OCI-LY7 (cell line): ENCODE measurements at regions of chr12 and their contacts with region 1.

Region 1: GRCh38 chr12:116880817-116881324 is 370 bp downstream of the HRK start:
- DNase-seq: peak; percentile 93
- H3K4me3 ChIP-seq: peak overlapping the region; percentile 76
- H3K27ac ChIP-seq: peak overlapping the region; percentile 57
- H3K4me1 ChIP-seq: peaks cover 46% of the 10 kb centered on the region
- CTCF ChIP-seq: peak; percentile 49; the same call in 1 of the 2 replicates

Region 2: DNA sequence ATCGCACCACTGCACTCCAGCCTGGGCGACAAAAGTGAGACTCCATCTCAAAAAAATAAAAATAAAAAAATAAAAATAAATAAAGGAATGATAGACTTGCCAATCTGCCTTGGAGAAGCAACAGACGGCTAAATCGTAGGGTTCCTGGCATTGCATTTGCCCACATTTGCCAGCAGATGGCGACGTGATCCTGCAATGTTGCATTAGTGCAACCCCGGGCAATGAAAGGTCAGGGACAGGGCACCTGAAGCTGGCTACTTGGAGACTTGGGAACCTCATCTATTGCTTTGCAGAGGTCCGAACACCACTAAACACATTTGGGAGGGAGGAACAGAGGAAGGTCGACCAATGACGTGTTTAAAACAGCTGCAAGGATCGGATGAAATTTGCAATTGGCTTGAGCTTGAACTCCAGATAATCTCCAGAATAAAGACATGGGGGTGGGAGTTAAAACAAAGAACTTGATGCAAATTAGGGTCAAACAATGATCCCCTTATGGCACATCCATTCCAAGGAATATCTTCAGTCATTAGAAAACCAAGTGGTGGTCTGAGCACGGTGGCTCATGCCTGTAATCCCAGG is 177.6 kb before region 1 on chr12:
- CTCF ChIA-PET with region 1: interaction called, 13 read pairs
- POLR2A ChIA-PET with region 1: interaction called, 4 read pairs
- intact Hi-C with region 1: loop called (anchors 1 kb)
- DNase-seq: peak; percentile 86
- H3K4me3 ChIP-seq: no peak overlapping the region
- H3K27ac ChIP-seq: no peak overlapping the region
- H3K4me1 ChIP-seq: peaks cover 31% of the 10 kb centered on the region
- CTCF ChIP-seq: peak; percentile 94

Region 3: DNA sequence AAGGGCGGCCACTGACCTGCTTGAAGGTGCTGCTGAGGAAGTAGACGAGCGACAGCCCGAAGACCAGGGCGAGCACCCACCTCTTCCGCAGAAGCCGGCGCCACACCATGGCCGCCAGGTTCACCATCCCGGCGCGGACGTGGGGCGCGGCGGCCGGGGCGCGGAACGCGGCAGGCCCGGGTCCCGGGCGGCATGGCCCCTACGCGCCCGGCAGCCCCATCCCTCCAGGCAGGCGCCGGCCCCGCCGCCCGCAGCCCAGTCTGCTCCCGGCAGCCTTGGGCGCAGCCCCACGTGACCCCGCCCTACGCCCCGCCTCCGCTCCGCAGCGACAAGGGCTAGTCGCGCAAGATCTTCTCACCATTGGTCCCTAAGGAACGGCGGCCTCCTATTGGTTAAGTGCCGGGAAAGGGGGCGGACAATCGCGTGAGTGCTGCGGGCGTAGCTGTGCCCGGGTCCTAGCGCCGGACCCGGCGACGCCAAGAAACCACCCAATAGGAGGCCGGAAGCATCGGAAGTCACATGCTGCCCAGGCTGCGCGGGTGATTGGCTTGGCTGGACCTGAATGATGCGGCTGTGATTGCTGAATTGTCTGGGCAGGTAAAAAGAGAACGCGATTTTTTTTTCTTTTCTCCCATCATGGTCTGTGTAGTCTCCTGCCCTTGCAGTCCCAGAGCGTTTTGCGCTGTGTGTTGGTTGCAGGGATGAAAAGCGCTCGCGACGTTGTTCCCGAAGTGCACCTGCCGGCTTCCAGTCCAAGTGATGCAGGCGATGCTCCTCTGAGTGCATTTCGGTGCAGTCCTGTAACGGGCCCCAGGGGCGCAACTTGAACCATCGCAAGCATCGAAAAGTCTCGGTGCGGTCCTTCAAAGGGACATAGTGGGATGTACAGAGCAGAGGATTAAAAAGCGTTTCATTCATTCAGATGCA is 142.8 kb before region 1 on chr12 and contains the starts of genes RNFT2 and SPRING1:
- CTCF ChIA-PET with region 1: no interaction called
- POLR2A ChIA-PET with region 1: no interaction called
- intact Hi-C with region 1: loop called (anchors 1 kb)
- DNase-seq: peak; percentile 99
- H3K4me3 ChIP-seq: peak within 1 kb of the TSS; percentile 81
- H3K27ac ChIP-seq: peak within 1 kb of the TSS; percentile 65
- H3K4me1 ChIP-seq: peaks cover 17% of the 10 kb centered on the region
- CTCF ChIP-seq: peak; percentile 64
- total RNA-seq, gene RNFT2: 34.3 and 40.2 TPM in 2 replicates
- total RNA-seq, gene SPRING1: 51.2 and 75.5 TPM in 2 replicates

Region 4: GRCh38 chr12:116818948-116819832 is 61.7 kb before region 1 on chr12:
- CTCF ChIA-PET with region 1: no interaction called
- POLR2A ChIA-PET with region 1: interaction called, 4 read pairs
- intact Hi-C with region 1: loop called (anchors 1 kb)
- DNase-seq: peak; percentile 90
- H3K4me3 ChIP-seq: peak overlapping the region; percentile 82
- H3K27ac ChIP-seq: peak overlapping the region; percentile 78
- H3K4me1 ChIP-seq: peaks cover 56% of the 10 kb centered on the region
- CTCF ChIP-seq: no peak

Region 5: DNA sequence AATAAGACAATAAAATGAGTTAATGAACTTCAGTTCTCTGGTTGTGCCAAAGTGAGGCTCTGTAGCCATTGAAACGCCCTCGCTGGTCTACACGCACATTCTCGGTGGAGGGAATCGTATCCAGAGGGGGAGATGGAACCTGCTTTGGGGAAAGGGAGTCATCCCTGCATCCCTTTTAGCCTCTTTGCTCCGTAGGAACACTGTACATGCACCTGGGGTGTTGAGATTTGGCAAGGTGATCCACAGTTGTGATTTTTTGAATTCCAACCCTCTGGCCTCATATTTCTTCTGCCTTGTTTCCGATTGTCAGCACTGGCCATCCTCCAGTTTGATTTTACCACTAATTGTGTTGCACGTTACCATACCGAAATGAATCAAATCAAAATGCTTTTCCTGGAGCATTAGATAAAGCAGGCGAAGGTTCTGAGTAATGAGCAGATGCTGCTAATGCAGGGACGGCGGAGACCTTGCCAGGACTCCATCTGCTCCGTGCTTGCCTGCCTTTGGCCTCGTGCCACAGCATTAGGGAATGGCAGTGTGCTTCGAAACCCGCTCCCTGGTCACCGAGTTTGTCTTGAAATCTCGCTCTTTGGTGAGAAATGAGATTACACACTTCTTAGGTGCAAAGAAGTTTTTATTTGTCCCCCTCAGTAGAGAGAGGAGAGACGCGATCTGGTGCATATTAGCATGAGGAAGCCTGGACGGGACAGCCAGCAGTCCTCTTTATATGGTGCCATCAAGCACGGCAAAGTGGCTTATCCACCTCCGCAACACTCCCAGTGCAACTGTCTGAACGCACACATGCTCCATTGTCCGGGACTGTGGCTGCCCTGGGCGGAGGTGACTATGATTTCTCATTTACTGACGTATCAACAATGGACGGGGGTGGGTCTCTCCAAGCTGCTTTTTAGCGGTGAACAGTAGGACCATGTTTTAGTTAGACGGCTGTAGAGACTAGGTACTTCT is 89.0 kb after region 1 on chr12:
- CTCF ChIA-PET with region 1: no interaction called
- POLR2A ChIA-PET with region 1: interaction called, 10 read pairs
- intact Hi-C with region 1: no loop called
- DNase-seq: no peak
- H3K4me3 ChIP-seq: no peak overlapping the region
- H3K27ac ChIP-seq: no peak overlapping the region
- H3K4me1 ChIP-seq: peaks cover 16% of the 10 kb centered on the region
- CTCF ChIP-seq: no peak

Region 6: GRCh38 chr12:117042171-117042842 is 161.4 kb after region 1 on chr12:
- CTCF ChIA-PET with region 1: no interaction called
- POLR2A ChIA-PET with region 1: no interaction called
- intact Hi-C with region 1: no loop called
- DNase-seq: no peak
- H3K4me3 ChIP-seq: no peak overlapping the region
- H3K27ac ChIP-seq: no peak overlapping the region
- H3K4me1 ChIP-seq: no peaks in the 10 kb centered on the region
- CTCF ChIP-seq: no peak

Region 7: DNA sequence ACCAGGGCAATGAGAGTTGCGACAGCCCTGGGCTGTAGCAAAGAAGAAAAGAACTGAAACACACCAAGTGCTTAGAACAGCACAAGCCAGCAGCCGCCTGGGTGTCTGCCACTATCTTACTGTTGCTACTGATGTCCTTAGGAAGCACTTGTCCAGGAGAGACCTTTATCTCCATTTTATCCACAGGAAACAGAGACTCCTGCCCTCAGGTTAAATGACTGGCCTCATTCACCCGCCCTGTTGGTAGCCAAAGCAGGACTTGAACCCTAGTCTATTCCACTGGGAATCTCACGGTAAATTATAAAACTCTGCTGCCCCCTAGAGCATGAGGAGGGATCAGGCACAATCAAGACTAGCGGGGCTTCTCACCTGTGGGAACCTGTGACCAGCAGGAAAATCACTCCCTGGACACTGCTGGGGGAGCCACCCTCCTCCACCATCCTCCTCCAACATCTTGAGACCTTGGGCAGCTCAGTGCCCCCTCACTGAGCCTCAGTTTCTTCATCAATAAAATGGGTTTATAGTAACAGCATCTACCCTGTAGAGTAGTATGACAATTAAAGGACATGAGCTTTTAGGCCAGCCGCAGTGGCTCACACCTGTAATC is 238.8 kb after region 1 on chr12:
- CTCF ChIA-PET with region 1: no interaction called
- POLR2A ChIA-PET with region 1: no interaction called
- intact Hi-C with region 1: loop called (anchors 10 kb)
- DNase-seq: peak; percentile 58
- H3K4me3 ChIP-seq: no peak overlapping the region
- H3K27ac ChIP-seq: no peak overlapping the region
- H3K4me1 ChIP-seq: no peaks in the 10 kb centered on the region
- CTCF ChIP-seq: peak; percentile 95